SK-N-SH (cell line): ENCODE measurements at regions of chr11 and their contacts with region 1.

Region 1: DNA sequence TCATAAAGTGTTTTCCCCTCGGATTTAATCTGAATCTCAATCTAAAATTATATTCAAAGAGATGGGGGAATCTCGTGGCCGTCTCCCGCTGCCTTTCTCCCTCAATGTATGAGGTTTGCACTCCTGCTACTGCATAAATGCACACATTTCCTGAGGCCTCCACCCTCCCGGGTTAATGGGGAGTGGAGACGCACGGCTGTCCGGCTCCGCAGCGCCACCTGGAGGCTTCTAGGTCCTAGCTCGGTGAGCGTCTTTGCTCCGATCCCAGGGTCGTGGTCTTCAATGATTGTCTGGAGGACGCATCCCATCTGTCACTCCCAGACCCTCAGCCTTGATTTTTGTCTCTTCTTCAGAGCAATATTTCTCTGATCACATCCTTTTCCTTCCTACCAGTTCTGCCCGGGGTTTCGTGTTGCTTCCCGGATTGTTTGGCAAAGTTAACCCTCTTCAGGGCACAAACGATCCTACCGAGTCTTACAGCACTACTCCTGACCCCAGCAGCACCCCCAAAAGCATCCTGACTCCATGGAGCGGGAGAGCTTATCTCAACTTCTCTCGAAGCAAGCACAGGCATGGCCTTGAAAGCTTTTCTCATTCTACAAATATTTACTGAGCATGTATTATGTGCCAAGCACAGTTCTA is at the start of gene LMO1:
- DNase-seq: peak; percentile 94
- H3K4me3 ChIP-seq: peak within 1 kb of the TSS; percentile 54 to 59
- H3K27ac ChIP-seq: peak within 1 kb of the TSS in 1 of 2 experiments; percentile 97; a peak in 2 of 4 replicates
- H3K4me1 ChIP-seq: peaks cover 5 to 69% of the 10 kb centered on the region in 2 experiments; a peak in 2 of 4 replicates
- H3K27me3 ChIP-seq: peaks cover 47% of the 10 kb centered on the region
- CTCF ChIP-seq: peak; percentile 88
- EP300 ChIP-seq: peak in 1 of 2 experiments; percentile 53; a peak in 2 of 4 replicates
- RAD21 ChIP-seq: peak; percentile 93
- polyA plus RNA-seq, gene LMO1: 0.12 and 0.62 TPM in 2 replicates

Region 2: DNA sequence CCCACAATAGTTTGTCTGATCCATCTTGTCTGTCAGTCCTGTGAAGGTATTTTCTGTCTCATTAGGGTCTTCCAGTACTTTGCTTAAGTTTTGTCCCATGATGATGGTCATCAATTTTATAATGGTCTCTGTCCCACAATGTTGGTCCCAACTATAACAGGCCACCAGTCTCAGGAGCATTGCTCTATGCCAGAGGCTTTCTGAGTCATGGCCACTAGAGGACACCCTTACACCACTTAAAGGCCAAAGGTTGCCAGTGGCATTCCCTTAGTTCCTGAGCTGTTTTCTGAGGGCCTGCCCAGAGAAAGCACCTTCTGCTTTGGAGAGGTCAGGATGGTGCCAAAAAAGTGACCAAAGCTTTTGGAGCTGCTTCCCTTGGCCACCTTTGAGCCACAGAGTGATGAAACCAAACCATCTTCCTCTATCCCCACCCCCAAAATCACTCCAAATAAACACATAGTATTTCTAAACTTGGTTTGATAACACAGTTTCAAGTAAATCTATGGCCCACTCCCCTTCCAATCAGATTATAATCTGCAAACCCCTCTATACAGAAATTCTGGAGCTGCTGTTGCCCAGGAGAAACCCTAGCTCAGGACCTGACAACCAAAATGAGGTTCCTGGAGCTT is 257.4 kb before region 1 on chr11:
- CTCF ChIA-PET with region 1: interaction called, 12 read pairs
- POLR2A ChIA-PET with region 1: no interaction called
- DNase-seq: peak; percentile 77
- H3K4me3 ChIP-seq: peak overlapping the region in 1 of 2 experiments; percentile 16; a peak in 1 of 4 replicates
- H3K27ac ChIP-seq: no peak overlapping the region
- H3K4me1 ChIP-seq: no peaks in the 10 kb centered on the region
- H3K27me3 ChIP-seq: no peaks in the 10 kb centered on the region
- CTCF ChIP-seq: peak; percentile 94
- EP300 ChIP-seq: no peak
- RAD21 ChIP-seq: peak; percentile 100

Region 3: DNA sequence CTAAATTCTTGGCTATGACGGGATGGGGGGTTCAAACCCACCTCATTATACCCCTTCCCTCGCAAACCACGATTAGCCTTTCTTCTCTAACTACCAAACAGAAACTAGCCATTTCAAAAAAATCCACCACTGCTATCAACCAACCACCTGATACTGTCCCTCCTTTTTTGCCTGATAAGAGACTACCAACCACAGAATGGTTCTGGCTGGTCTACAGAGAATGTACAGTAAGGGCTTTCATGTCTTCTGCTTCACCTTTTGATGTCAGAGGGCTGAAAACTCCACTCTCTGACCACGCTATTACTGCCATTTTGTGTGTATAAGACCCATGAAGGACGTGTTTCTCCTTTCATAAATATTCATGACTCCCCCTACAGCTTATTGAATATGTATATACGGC is 114.2 kb before region 1 on chr11:
- CTCF ChIA-PET with region 1: no interaction called
- POLR2A ChIA-PET with region 1: no interaction called
- DNase-seq: no peak
- H3K4me3 ChIP-seq: no peak overlapping the region
- H3K27ac ChIP-seq: no peak overlapping the region
- H3K4me1 ChIP-seq: no peaks in the 10 kb centered on the region
- H3K27me3 ChIP-seq: peaks cover 5% of the 10 kb centered on the region
- CTCF ChIP-seq: no peak
- EP300 ChIP-seq: no peak
- RAD21 ChIP-seq: no peak

Region 4: DNA sequence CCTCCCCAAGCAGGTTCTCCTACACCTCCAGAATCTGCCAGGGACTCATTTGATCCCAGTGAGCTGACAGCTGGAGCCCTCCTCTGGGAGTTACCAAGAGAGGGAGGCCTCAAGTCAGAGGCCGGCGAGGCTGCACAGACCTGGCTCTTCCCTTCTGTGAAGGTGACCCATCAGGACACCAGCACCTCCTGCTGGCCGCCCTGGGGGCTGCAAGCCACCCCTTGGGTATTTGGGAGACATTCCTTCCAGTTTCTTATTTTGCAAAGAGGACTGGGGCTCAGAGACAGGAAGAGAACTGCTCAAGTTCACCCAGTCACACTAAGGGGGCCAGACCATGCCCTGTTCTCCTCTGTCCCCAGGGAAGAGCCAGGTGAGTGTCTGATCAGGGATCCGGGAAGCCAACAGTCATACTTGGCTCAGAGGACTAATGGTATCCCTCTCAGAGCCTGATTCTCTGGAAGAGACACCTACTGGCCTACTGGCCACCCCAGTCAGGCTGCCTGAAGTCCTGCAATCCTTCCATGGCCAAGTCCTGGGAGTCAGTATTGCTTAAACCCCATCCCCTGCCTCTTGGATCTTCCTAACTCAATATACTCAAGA is 54.6 kb before region 1 on chr11:
- CTCF ChIA-PET with region 1: interaction called, 21 read pairs
- POLR2A ChIA-PET with region 1: interaction called, 16 read pairs
- DNase-seq: no peak
- H3K4me3 ChIP-seq: no peak overlapping the region
- H3K27ac ChIP-seq: no peak overlapping the region
- H3K4me1 ChIP-seq: peaks cover 0 to 27% of the 10 kb centered on the region in 2 experiments; a peak in 2 of 4 replicates
- H3K27me3 ChIP-seq: no peaks in the 10 kb centered on the region; the same call in 1 of the 2 replicates
- CTCF ChIP-seq: peak; percentile 48
- EP300 ChIP-seq: no peak
- RAD21 ChIP-seq: no peak

Region 5: GRCh38 chr11:8247312-8247711 is 16.6 kb before region 1 on chr11:
- CTCF ChIA-PET with region 1: interaction called, 302 read pairs
- POLR2A ChIA-PET with region 1: interaction called, 25 read pairs
- DNase-seq: no peak
- H3K4me3 ChIP-seq: no peak overlapping the region
- H3K27ac ChIP-seq: peak overlapping the region in 1 of 2 experiments; percentile 55; a peak in 1 of 4 replicates
- H3K4me1 ChIP-seq: peaks cover 0 to 75% of the 10 kb centered on the region in 2 experiments; a peak in 2 of 4 replicates
- H3K27me3 ChIP-seq: peaks cover 6% of the 10 kb centered on the region; the same call in 1 of the 2 replicates
- CTCF ChIP-seq: peak; percentile 34; the same call in 1 of the 2 replicates
- EP300 ChIP-seq: no peak
- RAD21 ChIP-seq: 0 out of 2 replicates have a peak, but pooled peaks have one; percentile 20

Region 6: GRCh38 chr11:8289492-8289918 is 25.6 kb after region 1 on chr11:
- CTCF ChIA-PET with region 1: interaction called, 24 read pairs
- POLR2A ChIA-PET with region 1: interaction called, 10 read pairs
- DNase-seq: no peak
- H3K4me3 ChIP-seq: no peak overlapping the region
- H3K27ac ChIP-seq: no peak overlapping the region
- H3K4me1 ChIP-seq: peaks cover 0 to 34% of the 10 kb centered on the region in 2 experiments; a peak in 1 of 4 replicates
- H3K27me3 ChIP-seq: no peaks in the 10 kb centered on the region
- CTCF ChIP-seq: no peak
- EP300 ChIP-seq: no peak
- RAD21 ChIP-seq: no peak

Region 7: GRCh38 chr11:8338138-8338537 is 74.2 kb after region 1 on chr11:
- CTCF ChIA-PET with region 1: interaction called, 10 read pairs
- POLR2A ChIA-PET with region 1: no interaction called
- DNase-seq: peak; percentile 94
- H3K4me3 ChIP-seq: no peak overlapping the region; a peak in 1 of 4 replicates
- H3K27ac ChIP-seq: peak overlapping the region in 1 of 2 experiments; percentile 72; a peak in 2 of 4 replicates
- H3K4me1 ChIP-seq: peaks cover 0 to 40% of the 10 kb centered on the region in 2 experiments; a peak in 1 of 4 replicates
- H3K27me3 ChIP-seq: no peaks in the 10 kb centered on the region
- CTCF ChIP-seq: peak; percentile 78
- EP300 ChIP-seq: peak in 1 of 2 experiments; percentile 66; a peak in 1 of 4 replicates
- RAD21 ChIP-seq: peak; percentile 72

Region 8: DNA sequence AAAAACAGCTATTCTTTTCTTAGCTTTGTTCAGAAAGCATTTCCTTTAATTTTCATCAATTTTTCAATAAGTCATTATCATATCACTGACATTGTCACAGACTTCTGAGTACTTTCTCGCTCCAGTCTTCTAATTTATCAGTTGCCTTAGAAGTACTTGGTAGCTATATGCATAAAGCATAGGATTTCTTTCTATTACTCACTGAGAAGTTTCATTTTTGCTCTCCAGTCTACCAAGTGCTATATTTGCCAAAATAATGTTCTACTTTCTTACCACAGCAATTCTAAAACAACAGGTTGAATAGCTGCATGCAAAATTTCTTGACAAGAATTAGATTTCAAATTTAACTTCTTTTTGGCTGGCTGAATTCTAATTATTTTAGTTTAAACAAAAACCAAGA is 213.8 kb after region 1 on chr11:
- CTCF ChIA-PET with region 1: no interaction called
- POLR2A ChIA-PET with region 1: no interaction called
- DNase-seq: no peak
- H3K4me3 ChIP-seq: no peak overlapping the region
- H3K27ac ChIP-seq: no peak overlapping the region
- H3K4me1 ChIP-seq: no peaks in the 10 kb centered on the region
- H3K27me3 ChIP-seq: no peaks in the 10 kb centered on the region
- CTCF ChIP-seq: no peak
- EP300 ChIP-seq: no peak
- RAD21 ChIP-seq: no peak